ENCODE measurements at regions of chr22 and their contacts with region 1.

Region 1: DNA sequence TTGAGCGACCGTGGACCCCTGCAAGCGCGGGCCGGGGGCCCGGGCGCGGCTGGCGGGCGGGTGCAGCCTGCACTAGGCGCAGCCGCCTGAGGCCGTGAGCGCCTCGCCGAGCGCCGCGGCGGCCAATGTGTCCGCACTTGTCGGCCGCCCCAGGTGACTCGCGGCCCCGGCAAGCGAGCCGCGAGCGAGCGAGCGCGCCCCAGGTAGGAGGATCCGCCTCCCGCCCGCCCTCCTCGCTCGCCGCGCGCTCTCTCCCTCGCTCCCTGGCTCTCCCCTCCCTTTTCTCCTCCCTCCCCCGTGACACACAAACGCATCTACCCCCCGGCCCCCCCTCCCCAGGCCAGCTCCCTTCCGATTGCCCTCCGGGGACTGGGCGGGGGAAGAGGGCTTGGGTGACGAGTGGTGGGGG is at the start of gene WNT7B:
- DNase-seq: peak; percentile 83
- ATAC-seq: peak; percentile 28
- H3K4me3 ChIP-seq: peak within 1 kb of the TSS; percentile 90
- H3K27ac ChIP-seq: peak within 1 kb of the TSS; percentile 13
- H3K4me1 ChIP-seq: peaks cover 27% of the 10 kb centered on the region
- H3K27me3 ChIP-seq: no peaks in the 10 kb centered on the region
- CTCF ChIP-seq: no peak
- total RNA-seq, gene WNT7B: 42.0 and 73.1 TPM in 2 replicates

Region 2: DNA sequence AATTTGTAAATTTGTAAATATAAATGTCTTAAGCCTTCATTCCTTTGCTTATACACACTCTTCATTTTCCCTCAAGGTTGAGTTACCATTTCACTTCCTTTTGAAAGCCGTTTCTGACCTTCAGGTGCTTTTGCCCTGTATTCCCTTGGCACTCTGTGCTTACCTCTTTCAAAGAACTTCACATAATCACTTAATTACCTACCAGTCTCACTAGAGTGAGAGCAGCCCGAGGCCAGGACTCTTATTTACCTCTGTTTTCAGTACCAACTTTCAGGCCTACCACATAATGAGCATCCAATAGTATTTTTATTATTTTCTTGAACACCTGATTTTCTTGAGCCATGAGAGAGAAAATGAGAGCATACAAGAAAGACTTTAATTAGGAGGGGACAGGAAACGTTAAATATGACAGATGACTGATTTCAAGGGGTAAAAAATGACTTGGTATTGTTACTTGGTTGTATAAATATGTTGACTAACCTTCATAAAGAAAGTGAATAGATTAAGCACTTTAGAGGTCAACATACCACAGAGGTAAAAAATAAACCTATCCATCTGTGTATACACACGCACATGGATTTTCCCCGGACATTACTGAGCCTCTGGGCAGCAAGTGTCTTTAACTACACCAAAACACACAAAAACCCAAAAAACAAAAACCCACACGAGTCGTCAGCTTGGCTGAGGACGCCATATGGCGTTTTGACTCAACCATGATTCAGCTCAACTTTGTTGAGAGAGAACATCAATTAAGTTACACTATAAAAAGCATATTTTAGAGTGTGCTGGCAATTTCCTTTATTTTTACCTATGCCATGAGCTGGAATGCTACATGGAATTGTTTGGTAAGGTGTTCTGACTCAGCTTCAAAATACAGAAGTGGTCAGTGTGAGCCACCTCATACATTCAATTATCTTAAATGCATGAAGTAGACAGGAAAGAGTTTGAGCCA is 297.8 kb before region 1 on chr22:
- CTCF ChIA-PET with region 1: interaction called, 10 read pairs
- POLR2A ChIA-PET with region 1: no interaction called
- intact Hi-C with region 1: no loop called
- DNase-seq: peak; percentile 95
- ATAC-seq: peak; percentile 78
- H3K4me3 ChIP-seq: peak overlapping the region; percentile 49; the same call in 1 of the 2 replicates
- H3K27ac ChIP-seq: peak overlapping the region; percentile 98
- H3K4me1 ChIP-seq: peaks cover 69% of the 10 kb centered on the region
- H3K27me3 ChIP-seq: no peaks in the 10 kb centered on the region
- CTCF ChIP-seq: no peak

Region 3: DNA sequence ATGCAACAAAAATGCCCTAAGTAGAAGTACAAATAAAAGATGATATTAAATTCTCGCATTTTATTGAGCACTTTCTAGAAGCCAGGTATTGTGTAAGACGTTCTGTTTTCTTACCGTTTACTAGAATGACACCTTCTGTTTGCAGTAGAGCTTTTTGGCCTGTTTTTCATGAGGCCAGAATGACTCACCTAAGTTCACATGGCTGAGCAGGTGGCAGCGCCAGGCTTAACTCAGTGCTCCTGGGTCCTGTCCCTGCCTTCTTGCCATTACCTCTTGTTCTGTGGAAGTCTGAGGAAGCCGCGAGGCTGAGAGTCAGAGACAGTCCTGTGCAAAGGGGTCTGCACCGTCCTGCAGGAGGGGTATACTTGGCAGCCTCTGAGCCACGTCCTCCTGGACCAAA is 191.5 kb before region 1 on chr22:
- CTCF ChIA-PET with region 1: no interaction called
- POLR2A ChIA-PET with region 1: interaction called, 12 read pairs
- intact Hi-C with region 1: no loop called
- DNase-seq: peak; percentile 89
- ATAC-seq: peak; percentile 93
- H3K4me3 ChIP-seq: peak overlapping the region; percentile 34; the same call in 1 of the 2 replicates
- H3K27ac ChIP-seq: peak overlapping the region; percentile 92
- H3K4me1 ChIP-seq: peaks cover 53% of the 10 kb centered on the region
- H3K27me3 ChIP-seq: no peaks in the 10 kb centered on the region
- CTCF ChIP-seq: no peak

Region 4: GRCh38 chr22:45896261-45896951 is 80.6 kb before region 1 on chr22:
- CTCF ChIA-PET with region 1: no interaction called
- POLR2A ChIA-PET with region 1: no interaction called
- intact Hi-C with region 1: no loop called
- DNase-seq: peak; percentile 85
- ATAC-seq: peak; percentile 58
- H3K4me3 ChIP-seq: no peak overlapping the region
- H3K27ac ChIP-seq: peak overlapping the region; percentile 85
- H3K4me1 ChIP-seq: peaks cover 20% of the 10 kb centered on the region
- H3K27me3 ChIP-seq: no peaks in the 10 kb centered on the region
- CTCF ChIP-seq: no peak

Region 5: DNA sequence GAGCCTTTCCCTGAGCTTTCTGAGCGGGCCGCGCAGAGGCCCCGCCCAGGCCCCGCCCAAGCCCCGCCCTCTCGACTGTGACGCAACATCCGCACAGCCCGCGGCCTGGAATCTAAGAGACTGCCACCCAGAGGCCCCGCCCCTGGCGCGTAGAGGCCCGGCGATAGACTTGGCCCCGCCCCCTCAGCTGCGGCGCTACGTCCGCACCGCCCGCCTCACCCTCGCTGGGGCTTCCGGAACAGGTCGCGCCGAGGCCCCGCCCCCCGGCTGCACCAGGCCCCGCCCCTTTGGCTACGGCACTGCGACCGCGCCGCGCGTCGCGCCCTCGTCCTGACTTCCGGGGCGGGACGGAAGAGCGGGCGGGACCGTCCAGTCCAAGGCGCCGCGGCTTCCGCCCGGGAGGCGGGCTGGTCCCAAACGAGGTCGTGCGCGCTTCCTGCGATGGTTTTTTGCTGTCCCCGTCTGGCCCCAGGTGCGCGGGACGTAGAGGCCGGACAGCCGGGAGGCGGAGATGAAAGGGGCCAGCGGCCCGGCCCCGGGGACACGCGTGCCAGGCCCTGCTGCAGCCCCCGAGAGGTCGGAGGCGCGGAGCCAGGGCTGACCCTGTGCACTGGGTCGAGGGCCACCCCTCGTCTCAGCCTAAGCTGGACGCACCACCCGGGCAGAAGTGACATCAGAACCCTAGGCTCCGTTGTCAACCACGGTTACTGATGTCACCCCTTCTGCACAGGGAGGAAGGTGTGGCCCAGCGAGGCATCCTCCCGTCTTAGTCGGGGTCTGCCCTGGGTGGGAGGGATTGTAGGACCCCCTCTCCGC is 58.9 kb after region 1 on chr22:
- CTCF ChIA-PET with region 1: no interaction called
- POLR2A ChIA-PET with region 1: no interaction called
- intact Hi-C with region 1: no loop called
- DNase-seq: peak; percentile 97
- ATAC-seq: peak; percentile 88
- H3K4me3 ChIP-seq: peak overlapping the region; percentile 81
- H3K27ac ChIP-seq: peak overlapping the region; percentile 85
- H3K4me1 ChIP-seq: peaks cover 23% of the 10 kb centered on the region
- H3K27me3 ChIP-seq: no peaks in the 10 kb centered on the region
- CTCF ChIP-seq: no peak